Breast epithelium (tissue), 4 donors: ENCODE measurements at regions of chr5 and their contacts with region 1.

Region 1: DNA sequence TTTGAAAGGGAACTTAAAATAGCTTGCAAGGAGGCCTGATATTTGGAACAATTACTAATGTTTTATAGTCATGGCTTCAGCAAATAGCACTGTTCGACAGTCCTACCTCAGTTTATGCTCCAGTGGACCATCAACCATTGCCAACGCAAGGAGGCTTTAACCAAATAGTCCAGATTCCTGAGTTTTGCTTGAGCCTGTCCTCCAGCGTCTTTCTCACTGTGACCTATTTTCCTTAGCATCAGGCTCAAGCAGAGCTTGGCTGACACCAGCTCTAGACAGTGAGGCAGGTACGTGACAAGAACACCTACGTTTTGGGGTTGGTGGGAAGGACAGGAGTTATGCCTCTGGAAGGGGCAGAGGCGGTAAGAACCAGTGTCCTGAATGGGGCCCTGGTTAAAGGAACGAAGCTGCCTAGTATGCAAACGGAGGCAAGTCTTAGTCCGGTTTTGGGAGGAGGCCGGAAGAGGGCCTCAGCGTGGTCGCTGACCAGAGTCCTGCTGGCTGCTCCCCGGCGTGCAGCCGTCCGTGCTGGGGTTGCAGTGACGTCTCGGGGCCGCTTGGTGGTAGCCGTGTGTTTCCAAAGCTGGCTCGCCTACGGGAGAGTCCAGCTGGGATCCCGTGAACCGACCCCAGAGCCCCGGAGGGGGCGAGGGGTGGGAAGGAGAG is 998 bp upstream of the FGF18 start:
- DNase-seq: peak; percentile 59 to 76
- H3K4me3 ChIP-seq: peak overlapping the region; percentile 38 to 66 (median 41)
- H3K27ac ChIP-seq: no peak overlapping the region
- H3K4me1 ChIP-seq: peaks cover 6 to 13% of the 10 kb centered on the region in 2 donors
- H3K27me3 ChIP-seq: peaks cover 0 to 20% of the 10 kb centered on the region in 2 donors
- CTCF ChIP-seq: peak; percentile 86 to 96 (median 91)
- POLR2A ChIP-seq: no peak

Region 2: DNA sequence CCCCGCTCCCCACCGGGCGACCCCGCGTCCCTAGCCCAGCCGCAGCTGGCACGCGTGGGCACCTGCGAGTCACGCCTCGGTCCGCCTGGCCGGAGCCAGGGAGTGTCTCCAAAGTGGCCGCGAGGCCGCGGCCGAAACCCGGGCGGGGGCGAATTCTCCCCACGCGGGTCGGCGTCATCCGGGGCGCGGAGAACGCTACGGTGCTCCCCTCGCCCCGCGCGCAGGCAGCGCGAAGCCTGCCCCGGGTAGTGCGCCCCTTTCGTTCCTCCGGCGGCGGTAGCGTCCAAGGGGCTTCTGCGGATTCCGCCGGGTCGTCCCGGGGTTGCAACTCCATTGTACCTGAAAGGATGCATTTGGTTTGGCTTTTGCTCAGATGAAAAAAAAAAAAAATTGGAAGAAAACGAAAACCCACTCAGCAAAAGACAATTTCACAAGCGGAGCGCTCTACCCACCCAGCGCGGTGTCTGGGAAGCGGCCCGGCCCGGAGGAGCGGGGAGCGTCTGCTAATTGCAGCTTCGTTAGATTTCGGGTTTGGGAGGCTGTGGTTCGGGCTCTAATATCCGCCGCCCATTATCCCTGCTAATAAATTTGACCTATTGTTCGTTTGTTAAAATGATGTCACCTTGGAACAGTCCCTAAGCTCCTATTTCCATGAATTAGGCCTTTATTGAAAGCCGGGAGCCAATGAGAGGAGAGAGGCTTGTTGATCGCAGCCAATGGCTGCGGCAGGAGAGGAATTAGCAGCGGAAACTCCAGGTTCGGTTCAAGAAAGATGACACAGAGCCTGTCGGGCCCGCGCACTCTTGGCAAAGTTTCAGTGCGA is 109.8 kb before region 1 on chr5 and contains the start of gene TLX3:
- intact Hi-C with region 1: no loop called
- DNase-seq: no peak
- H3K4me3 ChIP-seq: peak within 1 kb of the TSS in 1 of 3 donors; percentile 44
- H3K27ac ChIP-seq: no peak within 1 kb of the TSS
- H3K4me1 ChIP-seq: peaks cover 0 to 5% of the 10 kb centered on the region in 2 donors
- H3K27me3 ChIP-seq: peaks cover 20 to 97% of the 10 kb centered on the region in 2 donors
- CTCF ChIP-seq: no peak
- POLR2A ChIP-seq: no peak
- total RNA-seq, gene TLX3: not detected

Region 3: DNA sequence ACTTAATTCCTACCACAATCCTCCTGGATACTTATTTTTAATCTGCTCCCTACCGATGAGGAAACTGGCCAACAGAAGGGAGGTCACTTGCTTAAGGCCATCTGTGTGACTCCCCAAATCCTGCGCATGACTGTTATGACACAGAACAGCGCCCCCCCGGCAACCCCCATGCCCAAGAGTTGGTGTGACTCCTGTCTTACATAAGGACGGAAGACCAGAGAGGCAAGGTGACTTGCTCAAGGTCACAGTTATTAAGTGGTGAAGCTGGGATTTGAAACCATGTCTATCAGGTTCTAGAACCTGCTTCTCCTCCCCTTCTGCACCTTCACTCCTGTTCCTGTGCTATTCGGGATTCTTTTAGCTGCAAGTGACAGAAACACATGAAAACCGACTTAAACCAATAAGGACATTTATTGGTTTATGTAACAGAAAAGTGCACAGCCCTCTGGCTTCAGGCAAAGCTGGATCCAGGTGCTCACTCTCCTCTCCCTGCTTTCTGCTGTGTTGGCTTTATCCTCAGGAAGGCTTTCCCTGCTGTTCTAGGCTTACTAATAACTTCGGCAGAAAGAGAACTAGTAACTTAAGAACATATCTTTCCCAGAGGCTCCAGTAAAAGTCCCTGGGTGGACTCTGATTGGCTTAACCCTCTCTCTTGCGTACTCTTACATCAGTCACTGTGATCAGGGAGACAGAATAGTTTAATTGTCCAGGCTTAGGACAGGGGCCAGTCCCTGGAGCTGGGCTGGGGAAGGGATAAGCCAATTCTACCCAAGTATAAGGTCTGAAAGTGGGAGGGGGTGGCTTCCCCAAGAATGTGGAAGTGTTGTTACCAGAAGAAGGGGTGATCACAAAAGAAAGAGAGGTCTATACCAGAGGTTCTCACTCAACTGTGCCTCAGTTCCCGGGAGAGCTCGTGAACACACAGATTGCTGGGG is 44.7 kb after region 1 on chr5:
- intact Hi-C with region 1: loop called (anchors 2 kb)
- DNase-seq: no peak
- H3K4me3 ChIP-seq: no peak overlapping the region
- H3K27ac ChIP-seq: no peak overlapping the region
- H3K4me1 ChIP-seq: no peaks in the 10 kb centered on the region
- H3K27me3 ChIP-seq: no peaks in the 10 kb centered on the region
- CTCF ChIP-seq: no peak
- POLR2A ChIP-seq: no peak

Region 4: DNA sequence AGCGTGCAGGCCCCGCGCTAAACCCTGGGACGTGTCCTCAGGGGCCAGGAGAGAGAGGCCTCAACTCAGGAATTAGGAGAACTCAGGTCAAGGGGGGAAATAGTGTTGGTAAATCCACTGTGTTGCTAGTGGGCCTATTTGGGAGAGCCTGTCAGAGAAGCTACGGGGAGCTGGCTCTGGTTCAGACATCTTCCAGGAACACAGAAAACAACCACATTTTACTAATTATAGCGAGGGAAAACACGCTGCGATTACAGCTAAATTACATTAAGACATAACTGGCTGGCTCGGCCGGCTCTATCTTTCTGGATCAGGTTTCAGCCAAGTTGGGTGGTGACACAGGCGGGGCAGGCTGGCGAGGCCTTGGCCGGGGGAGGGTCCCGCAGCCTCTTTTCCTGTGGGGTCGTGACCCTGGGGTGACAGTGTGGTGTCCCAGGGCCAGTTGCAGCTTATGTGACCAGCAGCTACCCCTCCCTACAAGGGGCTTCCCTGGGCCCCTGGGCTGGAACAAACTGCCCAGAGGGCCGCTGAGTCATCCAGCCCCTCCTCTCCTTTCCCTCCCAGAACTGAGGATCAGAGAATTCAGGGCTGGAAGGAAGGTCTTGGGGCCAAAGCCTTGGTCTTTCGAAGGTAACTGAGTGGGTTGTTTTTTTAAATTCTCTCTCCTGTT is 76.1 kb after region 1 on chr5:
- intact Hi-C with region 1: loop called (anchors 2 kb)
- DNase-seq: peak in 1 of 2 donors; percentile 35
- H3K4me3 ChIP-seq: peak overlapping the region in 1 of 3 donors; percentile 39
- H3K27ac ChIP-seq: peak overlapping the region; percentile 68 to 89
- H3K4me1 ChIP-seq: peaks cover 0 to 5% of the 10 kb centered on the region in 2 donors
- H3K27me3 ChIP-seq: no peaks in the 10 kb centered on the region
- CTCF ChIP-seq: no peak
- POLR2A ChIP-seq: no peak